ENCODE measurements at regions of chr19 and their contacts with region 1.

Region 1: GRCh38 chr19:18995804-18996241 is 37.5 kb downstream of the SUGP2 start:
- DNase-seq: peak; percentile 97
- H3K4me3 ChIP-seq: no peak overlapping the region
- H3K27ac ChIP-seq: peak overlapping the region; percentile 67
- H3K4me1 ChIP-seq: peaks cover 10% of the 10 kb centered on the region
- H3K27me3 ChIP-seq: no peaks in the 10 kb centered on the region
- CTCF ChIP-seq: peak; percentile 89

Region 2: GRCh38 chr19:19138169-19138981 is 142.6 kb after region 1 on chr19 and contains the start of gene TMEM161A:
- CTCF ChIA-PET with region 1: no interaction called
- POLR2A ChIA-PET with region 1: no interaction called
- intact Hi-C with region 1: loop called (anchors 5 kb)
- DNase-seq: peak; percentile 99
- H3K4me3 ChIP-seq: peak within 1 kb of the TSS; percentile 72
- H3K27ac ChIP-seq: peak within 1 kb of the TSS; percentile 88
- H3K4me1 ChIP-seq: no peaks in the 10 kb centered on the region
- H3K27me3 ChIP-seq: no peaks in the 10 kb centered on the region
- CTCF ChIP-seq: no peak
- total RNA-seq, gene TMEM161A: 34.4 and 42.8 TPM in 2 replicates